ENCODE measurements at regions of chr10 and their contacts with region 1.

Region 1: GRCh38 chr10:45249978-45250693 is 65.3 kb downstream of the OR13A1 start:
- ATAC-seq: peak; percentile 66 to 94 (median 84)
- H3K4me3 ChIP-seq: peak overlapping the region; percentile 21 to 38 (median 30)
- H3K27ac ChIP-seq: no peak overlapping the region
- H3K4me1 ChIP-seq: no peaks in the 10 kb centered on the region

Region 2: GRCh38 chr10:45008524-45009161 is 241.5 kb before region 1 on chr10:
- in situ Hi-C with region 1: loop called in 1 of 9 experiments (anchors 25 kb)
- ATAC-seq: peak; percentile 88 to 99 (median 96)
- H3K4me3 ChIP-seq: no peak overlapping the region
- H3K27ac ChIP-seq: no peak overlapping the region
- H3K4me1 ChIP-seq: peaks cover 2% of the 10 kb centered on the region in 2 donors

Region 3: DNA sequence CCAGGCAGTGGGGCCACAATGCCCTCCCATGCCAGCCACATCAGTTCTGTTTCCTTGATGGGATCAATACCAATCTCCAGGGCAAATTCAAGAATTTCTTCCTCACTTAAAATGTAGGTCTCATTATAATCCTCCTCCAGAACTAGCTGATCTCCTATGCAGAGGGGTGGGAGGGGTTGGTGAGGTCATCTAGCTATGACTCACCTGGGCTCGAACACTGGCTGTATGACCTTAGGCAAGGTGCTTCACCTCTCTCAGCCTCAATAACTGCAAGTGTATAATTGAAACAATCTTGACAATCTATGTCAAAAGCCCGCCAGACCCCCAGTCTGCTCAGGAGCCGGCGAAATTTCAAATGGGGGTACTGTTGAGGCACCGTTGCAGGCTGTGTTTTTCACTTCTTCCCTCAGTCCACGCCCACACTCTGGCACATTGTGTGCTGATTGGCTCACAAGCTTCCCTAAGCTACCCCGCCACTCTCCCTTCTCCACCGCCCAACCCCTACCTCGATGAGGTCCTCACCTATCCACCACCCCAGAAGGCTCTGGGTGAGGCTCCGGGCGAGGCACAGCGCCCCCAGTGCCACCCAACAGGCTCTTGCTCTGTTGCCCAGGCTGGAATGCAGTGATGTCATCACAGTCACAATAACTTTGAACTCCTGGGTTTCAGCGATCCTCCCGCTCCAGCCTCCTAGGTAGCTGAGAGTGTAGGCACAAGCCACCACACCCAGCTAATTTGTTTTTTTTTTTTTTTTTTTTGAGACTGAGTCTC is 178.9 kb before region 1 on chr10:
- in situ Hi-C with region 1: no loop called
- ATAC-seq: peak in 2 of 8 experiments; percentile 50 to 57
- H3K4me3 ChIP-seq: no peak overlapping the region
- H3K27ac ChIP-seq: no peak overlapping the region
- H3K4me1 ChIP-seq: peaks cover 0 to 9% of the 10 kb centered on the region in 2 donors

Region 4: GRCh38 chr10:45433716-45434469 is 183.8 kb after region 1 on chr10:
- in situ Hi-C with region 1: loop called in 1 of 9 experiments (anchors 25 kb)
- ATAC-seq: no peak
- H3K4me3 ChIP-seq: no peak overlapping the region
- H3K27ac ChIP-seq: no peak overlapping the region
- H3K4me1 ChIP-seq: no peaks in the 10 kb centered on the region

Region 5: DNA sequence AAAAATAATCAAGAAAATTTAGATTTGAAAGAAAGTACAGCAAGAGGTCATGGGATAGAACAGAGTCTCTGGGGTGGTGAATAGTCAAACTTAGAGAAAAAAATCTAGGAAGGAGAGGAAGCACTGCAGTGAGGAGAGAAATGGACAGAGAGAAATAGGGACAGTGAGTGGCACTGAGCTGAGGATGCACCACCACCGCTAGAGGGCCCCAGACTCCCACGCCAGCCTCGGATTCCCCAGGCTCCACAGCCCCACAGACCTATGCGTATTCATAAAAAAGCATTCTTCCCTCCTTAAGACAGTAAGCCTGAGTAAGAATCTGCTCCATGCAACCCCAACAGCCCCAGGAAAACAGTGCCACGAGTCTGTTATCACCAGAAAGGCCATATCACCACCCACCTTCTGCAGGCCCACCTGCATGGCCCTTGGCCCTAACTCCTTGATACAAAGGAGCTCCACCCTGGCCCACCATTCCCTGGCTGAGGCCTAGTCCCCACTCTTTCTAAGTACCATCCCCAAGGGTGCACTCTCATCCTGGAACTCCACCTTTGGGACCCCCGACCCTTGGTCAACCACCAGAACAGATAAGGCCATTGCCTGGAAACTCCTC is 214.9 kb after region 1 on chr10:
- in situ Hi-C with region 1: loop called in 1 of 9 experiments (anchors 25 kb)
- ATAC-seq: peak; percentile 99 to 100 (median 100)
- H3K4me3 ChIP-seq: no peak overlapping the region
- H3K27ac ChIP-seq: no peak overlapping the region
- H3K4me1 ChIP-seq: peaks cover 3 to 5% of the 10 kb centered on the region in 2 donors

Region 6: DNA sequence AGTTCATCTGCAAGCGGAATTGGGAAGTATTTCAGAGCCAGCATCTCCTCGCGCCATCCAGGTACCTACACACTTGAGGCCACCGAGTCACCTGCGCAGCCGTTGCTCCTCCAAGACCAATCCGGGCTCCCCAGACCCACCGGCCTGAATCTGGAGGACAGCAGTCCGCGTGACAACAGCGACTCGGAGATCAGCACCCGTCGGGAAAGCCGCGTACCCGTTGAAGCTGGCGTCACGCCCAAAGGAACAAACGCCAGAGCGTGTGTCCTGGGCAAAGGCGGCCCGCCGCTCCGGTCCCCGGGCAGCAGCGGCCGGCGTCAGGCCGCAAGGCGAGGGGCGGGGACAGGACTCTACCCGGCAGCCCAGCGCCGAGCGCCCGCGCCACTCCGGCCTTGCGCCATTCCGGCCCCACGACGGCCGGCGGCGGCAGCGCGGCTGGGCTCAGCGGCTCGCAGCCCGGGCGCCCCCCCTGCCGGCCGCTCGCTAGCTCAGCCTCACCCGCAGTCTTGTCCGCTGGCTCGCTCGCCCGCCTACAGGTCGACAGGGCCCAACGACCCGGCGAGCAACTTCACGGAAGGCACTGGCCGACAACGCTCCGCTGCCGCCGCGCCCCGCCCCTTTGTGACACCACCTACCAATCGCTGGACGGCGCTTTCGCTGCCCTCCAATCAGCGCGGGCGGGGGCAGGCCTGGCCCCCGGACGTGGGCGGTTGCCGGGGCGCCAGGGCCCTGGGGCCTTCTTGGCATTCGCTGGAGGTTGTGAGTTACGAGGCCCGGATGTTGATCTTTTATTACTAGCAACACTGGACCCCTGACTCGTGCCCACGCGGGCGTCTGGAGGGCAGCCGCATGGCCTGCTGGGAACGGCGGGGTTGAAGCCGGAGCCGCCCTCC is 422.3 kb after region 1 on chr10 and contains the start of gene ZFAND4:
- in situ Hi-C with region 1: loop called in 1 of 9 experiments (anchors 25 kb)
- ATAC-seq: peak; percentile 93 to 98 (median 96)
- H3K4me3 ChIP-seq: peak within 1 kb of the TSS; percentile 54 to 78 (median 60)
- H3K27ac ChIP-seq: peak within 1 kb of the TSS; percentile 30 to 83
- H3K4me1 ChIP-seq: no peaks in the 10 kb centered on the region
- total RNA-seq, gene ZFAND4: 5.1 to 14.4 (median 9.0) TPM